Activated CD4-positive, alpha-beta T cell treated with anti-CD3 and anti-CD28 coated beads, Interleukin-2, amount 10 ng/mL, durations not matched to agents 7 days and 5 days (primary cell): ENCODE measurements at regions of chr19 and their contacts with region 1.

Region 1: DNA sequence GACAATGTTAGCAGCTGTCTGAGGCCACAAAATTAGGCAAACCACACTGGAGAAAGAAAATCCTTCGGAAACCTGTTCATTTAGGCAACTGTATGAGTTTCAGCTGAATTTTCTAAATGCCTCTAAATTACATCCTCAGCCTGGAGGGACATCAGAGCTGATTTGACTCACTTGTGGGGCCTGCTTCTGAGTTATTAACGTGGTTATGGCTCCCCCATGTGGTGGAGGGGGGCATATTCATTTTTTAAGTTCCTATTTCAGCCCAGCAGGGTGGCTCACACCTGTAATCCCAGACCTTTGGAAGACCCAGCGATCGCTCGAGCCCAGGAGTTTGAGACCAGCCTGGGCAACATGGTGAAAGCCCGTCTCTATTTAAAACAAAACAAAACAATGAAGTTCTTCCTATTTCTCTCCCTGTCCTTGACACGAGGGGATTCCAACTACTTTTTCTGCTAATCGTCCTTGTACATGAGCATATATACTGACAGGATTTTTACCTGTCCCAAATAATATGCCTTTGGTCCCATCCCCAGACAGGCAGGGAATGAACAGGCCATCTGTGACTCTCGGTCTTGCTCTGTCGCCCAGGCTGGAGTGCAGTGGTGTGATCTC is 31.5 kb upstream of the HIF3A start:
- DNase-seq: peak; percentile 81
- H3K4me3 Mint-ChIP-seq: no peak overlapping the region
- H3K27ac Mint-ChIP-seq: no peak overlapping the region
- H3K4me1 Mint-ChIP-seq: peaks cover 19% of the 10 kb centered on the region
- H3K27me3 Mint-ChIP-seq: peaks cover 49% of the 10 kb centered on the region

Region 2: DNA sequence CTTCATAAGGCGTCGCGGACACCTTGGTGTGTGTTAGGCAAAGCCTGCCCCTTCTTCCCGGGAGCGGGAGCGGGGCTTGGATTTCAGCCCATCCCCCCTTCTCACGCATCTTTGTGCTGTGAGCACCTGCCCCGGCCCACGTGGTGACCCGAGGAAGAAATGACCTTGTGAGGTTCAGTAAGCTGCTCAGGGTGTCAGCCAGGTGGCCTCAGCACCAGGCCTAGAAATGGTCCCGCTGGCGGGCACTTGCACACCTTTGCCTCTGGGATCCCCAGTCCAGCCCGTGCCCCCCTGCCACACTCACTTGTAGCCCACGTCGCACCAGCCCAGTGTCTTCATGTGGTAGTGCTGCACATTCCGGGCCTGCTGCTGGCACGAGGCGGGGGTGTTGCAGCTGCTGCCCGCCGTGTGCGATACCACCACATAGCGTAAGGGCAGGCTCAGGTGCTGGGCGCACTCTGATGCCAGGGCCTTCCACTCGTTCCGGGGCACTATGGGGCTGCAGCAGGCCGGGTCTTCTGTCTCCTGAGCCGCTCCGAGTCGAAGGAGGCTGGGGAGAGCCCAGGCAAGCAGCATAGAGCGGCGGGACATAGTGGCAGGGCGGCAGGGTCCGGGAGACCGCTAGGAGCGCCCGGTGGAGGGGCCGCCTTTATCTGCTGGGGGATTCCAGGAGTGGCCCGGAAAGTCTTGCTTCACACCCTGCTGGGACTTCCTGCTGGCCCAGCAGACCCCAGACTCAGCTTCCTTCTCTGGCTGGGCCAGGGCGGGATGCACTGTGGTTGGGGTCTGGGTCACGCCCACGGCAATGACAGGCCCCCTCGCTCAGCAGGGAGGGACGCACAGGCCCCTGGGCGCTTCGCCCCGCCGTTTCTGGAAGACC is 242.7 kb before region 1 on chr19 and contains the start of gene PGLYRP1:
- CTCF ChIA-PET with region 1: interaction called, 18 read pairs
- POLR2A ChIA-PET with region 1: no interaction called
- DNase-seq: no peak
- H3K4me3 Mint-ChIP-seq: no peak within 1 kb of the TSS
- H3K27ac Mint-ChIP-seq: no peak within 1 kb of the TSS
- H3K4me1 Mint-ChIP-seq: peaks cover 12% of the 10 kb centered on the region
- H3K27me3 Mint-ChIP-seq: peaks cover 28% of the 10 kb centered on the region
- total RNA-seq, gene PGLYRP1: not detected

Region 3: DNA sequence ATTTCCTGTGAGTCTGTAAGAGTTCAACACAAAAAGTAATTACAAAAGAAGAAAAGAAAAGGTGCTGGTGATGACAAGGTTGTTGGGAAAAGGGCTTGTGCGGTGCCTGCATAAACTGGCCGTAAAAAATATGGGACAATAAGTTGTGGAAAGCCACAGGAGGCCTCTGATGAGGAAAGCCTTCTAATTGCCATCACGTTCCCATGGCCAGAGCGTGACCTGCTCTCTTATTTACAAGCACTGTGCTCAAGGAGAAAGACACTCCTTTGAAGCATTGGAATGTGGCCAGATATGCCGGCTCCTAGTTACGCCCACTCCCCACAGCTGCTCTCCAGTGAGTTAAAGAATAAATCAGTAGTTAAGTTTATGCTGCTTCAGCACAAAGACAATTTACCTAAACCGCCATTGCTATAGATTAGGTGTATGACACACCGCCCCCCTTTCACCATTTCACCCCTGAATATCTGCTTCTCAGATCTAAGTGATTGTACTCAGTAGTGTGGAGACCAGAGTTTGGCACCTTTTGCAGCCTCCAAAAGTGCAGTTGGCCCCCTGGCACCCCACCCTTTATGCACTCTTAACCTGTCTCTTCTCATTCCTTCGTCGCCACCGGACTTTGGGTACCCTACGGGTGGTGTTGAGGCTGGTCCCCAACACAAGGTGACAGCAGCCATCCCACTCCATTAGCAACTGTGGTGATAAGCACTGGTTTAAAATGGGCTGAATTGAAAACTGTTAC is 234.3 kb before region 1 on chr19:
- CTCF ChIA-PET with region 1: interaction called, 18 read pairs
- POLR2A ChIA-PET with region 1: no interaction called
- DNase-seq: no peak
- H3K4me3 Mint-ChIP-seq: no peak overlapping the region
- H3K27ac Mint-ChIP-seq: no peak overlapping the region
- H3K4me1 Mint-ChIP-seq: peaks cover 11% of the 10 kb centered on the region
- H3K27me3 Mint-ChIP-seq: peaks cover 15% of the 10 kb centered on the region

Region 4: DNA sequence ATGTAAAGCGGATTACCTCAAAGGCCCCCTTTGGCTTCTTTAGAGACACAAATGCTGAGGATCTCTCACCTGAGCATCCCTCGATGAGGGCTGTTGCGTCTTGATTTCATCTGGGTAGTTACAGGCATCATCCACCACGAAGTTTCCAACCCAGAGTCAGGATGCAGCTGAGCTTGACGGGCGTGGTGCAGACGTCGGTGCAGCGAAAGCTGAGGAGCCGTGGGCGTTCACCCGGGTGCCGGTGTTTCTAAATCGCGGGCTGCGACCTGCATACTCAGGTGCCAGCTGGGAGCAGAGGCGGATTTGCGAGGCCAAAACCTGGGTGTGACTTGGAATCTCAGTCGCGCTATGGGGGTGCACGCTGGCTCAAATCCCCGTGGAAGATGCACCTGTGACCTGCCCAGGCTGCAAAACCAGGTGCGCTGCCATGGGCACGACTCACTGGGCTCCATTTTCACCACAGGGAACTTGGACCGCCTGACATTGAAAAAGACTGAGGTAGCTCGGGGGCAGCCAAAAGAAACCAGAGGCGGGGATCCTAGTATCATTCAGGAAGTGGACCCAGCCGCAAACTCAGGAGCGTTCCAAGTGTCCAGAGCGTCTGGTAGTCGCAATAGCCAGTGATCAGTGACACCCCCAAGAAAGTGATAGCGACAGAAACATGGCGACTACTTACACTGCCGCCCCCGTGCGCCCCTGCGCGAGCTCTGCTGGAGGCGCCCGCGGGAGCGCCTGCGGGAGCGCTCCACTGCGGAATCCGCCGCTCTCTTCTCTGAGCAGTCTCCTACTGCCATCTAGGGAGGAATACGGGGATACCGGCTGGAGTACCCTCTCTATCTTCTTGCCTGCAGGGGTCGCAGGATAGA is 188.1 kb before region 1 on chr19:
- CTCF ChIA-PET with region 1: interaction called, 10 read pairs
- POLR2A ChIA-PET with region 1: no interaction called
- DNase-seq: peak; percentile 22
- H3K4me3 Mint-ChIP-seq: no peak overlapping the region
- H3K27ac Mint-ChIP-seq: no peak overlapping the region
- H3K4me1 Mint-ChIP-seq: peaks cover 2% of the 10 kb centered on the region
- H3K27me3 Mint-ChIP-seq: peaks cover 81% of the 10 kb centered on the region

Region 5: DNA sequence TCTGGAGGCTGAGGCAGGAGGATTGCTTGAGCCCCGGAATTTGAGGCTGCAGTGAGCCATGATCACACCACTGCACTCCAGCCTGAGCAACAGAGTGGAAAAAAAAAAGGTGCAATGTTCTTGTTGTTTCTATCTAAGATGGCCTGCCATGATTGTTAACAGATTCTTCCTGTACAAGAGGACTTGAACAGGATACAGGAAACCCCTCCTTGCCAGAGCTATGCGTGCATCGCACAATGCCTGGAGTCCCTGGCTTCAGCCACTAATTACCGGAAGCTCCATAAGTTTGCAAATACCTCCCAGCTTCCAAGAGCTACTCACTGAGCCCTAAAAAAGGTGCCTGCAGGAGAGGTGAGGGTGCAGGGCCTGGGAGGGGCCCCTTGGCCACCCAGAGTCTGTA is 18.4 kb after region 1 on chr19:
- CTCF ChIA-PET with region 1: no interaction called
- POLR2A ChIA-PET with region 1: no interaction called
- DNase-seq: no peak
- H3K4me3 Mint-ChIP-seq: no peak overlapping the region
- H3K27ac Mint-ChIP-seq: no peak overlapping the region
- H3K4me1 Mint-ChIP-seq: no peaks in the 10 kb centered on the region
- H3K27me3 Mint-ChIP-seq: peaks cover 5% of the 10 kb centered on the region